Activated CD4-positive, alpha-beta memory T cell treated with anti-CD3 and anti-CD28 coated beads, Interleukin-2, amount 10 ng/mL, durations not matched to agents 7 days and 5 days (primary cell): ENCODE measurements at regions of chr11 and their contacts with region 1.

Region 1: DNA sequence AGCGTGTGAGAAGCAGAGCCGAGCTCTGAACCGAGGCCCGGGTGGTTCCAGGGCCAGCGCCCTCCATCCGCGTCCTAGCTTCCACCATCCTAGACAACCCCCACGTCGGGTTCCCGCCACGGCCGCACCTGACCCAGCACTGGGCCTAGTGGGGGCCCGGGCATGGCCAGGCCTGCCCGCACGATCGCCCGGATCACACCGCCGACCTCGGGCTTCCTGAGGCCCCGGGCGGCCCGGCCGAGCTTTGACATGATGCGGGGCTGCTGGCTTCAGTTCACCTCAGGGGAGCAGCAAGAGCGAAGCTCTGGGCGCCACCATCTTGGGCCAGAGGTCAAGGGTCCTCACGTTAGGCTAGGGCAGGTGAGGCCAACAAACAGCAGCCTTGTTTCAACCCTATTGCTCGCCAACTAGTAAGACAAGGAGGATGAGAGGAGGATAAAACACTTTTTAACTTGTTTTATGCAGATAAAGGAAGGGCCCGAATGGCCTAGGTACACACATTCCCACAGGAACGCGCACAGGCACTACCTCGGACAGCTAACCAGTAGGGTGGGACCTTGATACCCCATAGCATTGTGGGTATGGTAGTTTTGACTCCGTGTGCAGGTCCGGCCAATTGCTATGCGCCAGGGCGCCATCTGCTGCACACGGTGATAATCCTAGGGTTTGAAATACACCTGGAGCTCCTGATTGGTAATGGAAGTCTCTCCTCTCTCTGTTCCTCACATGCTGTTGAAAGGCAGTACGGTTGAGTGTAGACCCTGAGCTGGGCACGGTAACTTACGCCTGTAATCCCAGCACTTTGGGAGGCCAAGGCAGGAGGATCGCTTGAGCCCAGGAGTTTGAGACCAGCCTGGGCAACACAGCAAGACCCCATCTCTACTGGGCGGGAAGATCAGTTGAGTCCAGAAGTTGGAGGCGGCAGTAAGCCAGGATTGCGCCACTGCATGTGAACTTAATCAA is at the start of gene MRPL11:
- DNase-seq: peak; percentile 91
- H3K4me3 Mint-ChIP-seq: peak within 1 kb of the TSS; percentile 88
- H3K27ac Mint-ChIP-seq: peak within 1 kb of the TSS; percentile 89
- H3K4me1 Mint-ChIP-seq: peaks cover 24% of the 10 kb centered on the region
- H3K27me3 Mint-ChIP-seq: no peaks in the 10 kb centered on the region
- total RNA-seq, gene MRPL11: 44.2 to 55.3 TPM

Region 2: DNA sequence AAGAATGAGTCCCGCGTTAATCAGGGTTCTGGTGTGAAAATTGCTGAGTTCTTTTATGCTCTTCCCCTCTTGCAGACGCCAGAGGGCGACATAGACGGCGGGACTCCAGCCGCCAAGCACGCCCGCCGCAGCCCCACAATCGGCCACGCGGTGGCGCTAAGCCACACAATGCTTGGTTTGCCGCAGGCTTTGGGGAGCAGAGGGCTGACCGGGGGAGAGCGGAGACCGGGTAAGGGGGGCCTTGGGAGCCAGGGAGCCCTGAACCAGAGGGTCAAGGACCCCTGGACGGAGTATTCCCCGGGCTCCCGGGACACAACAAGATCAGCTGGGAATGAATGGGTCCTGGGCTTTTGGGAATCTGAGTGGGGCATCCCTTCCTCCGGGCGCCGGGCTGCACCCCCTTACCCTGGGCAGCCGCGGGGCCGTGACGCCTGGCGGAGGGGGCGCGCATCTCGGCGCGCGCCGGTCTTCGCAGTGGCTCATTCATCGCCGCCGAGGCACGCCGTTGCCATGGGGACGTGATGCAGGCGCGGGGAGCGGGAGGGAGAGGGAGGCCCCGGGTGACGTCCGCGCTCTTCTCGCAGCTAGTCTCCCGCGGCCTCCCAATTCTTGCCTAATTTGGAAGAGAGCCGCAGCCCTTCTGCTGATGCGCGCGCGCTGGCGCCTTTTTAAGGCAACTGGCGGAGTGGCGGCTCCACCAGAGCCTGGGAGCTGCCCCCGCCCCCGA is 30.1 kb before region 1 on chr11:
- CTCF ChIA-PET with region 1: interaction called, 34 read pairs
- POLR2A ChIA-PET with region 1: interaction called, 3 read pairs
- DNase-seq: peak; percentile 91
- H3K4me3 Mint-ChIP-seq: peak overlapping the region; percentile 62
- H3K27ac Mint-ChIP-seq: no peak overlapping the region
- H3K4me1 Mint-ChIP-seq: peaks cover 5% of the 10 kb centered on the region
- H3K27me3 Mint-ChIP-seq: peaks cover 18% of the 10 kb centered on the region

Region 3: DNA sequence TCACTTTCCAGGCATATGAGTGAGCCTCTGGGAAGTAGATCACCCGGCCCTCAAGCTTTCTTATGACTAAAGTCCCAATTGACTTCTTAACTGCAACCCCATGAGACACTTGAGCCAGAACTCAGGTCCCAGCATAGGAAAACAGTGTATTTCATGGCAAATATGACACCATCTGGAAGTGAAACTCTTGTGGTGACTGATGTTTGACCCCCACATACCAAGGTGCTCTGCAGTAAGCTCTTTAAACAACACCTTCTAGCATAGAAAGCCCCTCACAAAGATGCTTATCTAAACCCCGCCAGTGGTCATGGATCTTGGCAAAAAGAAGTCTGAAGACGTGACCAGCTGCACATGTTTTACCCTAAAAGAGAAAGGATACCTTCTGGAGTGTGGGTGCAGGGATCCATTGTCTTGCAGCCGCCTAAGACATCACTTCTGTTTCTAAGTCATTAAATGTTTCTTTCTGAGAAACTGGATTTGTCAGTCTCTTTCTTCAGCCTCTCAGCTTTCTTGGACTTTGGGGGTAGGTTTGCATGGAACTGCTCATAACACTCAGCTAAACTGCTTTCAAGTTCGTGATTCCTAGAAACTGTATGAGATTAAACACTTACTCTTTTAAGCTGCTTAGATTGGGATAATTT is 20.5 kb after region 1 on chr11:
- CTCF ChIA-PET with region 1: interaction called, 10 read pairs
- POLR2A ChIA-PET with region 1: no interaction called
- DNase-seq: no peak
- H3K4me3 Mint-ChIP-seq: no peak overlapping the region
- H3K27ac Mint-ChIP-seq: no peak overlapping the region
- H3K4me1 Mint-ChIP-seq: peaks cover 39% of the 10 kb centered on the region
- H3K27me3 Mint-ChIP-seq: no peaks in the 10 kb centered on the region

Region 4: DNA sequence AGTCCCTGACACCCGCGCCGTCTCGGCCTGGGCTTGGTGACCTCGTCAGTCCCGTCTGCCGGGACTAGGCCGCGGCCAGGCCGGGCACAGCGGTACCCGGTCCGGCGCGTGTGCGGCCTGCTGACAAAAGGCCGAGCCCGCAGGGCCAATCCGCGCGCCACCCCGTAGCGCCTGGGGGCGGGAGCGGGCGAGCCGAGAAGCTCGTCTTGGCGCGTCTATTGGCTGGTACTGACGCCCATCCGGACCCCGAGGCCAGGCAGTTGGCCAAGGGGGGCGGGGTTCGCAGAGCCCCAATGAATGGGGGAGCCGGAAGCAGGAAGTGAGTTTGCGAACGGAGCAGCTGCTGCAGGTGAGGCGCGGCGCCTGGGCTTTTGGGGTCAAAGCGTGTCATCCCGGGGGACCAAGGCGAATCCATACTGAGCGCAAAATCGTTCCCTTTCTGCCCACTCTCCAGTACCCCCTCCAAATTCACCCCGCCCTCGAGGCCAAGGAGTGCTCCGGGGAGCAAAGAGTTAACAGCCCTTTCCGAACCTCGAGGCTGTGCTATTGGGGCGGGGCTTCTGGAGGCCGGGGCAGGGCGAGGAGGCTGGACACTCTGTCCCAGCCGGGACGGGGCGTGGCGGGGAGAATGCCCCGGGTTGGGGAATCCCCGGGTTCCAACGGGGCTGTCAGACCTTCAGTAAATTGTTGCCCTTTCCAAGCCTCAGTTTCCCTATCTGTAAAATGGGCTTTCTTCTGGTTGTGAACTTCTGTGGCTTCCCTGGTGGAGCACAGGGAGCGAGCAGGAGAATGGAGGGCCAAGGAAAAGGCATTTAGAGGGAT is 41.5 kb after region 1 on chr11 and contains the start of gene DPP3:
- CTCF ChIA-PET with region 1: interaction called, 19 read pairs
- POLR2A ChIA-PET with region 1: interaction called, 15 read pairs
- DNase-seq: peak; percentile 97
- H3K4me3 Mint-ChIP-seq: peak within 1 kb of the TSS; percentile 78
- H3K27ac Mint-ChIP-seq: peak within 1 kb of the TSS; percentile 86
- H3K4me1 Mint-ChIP-seq: peaks cover 27% of the 10 kb centered on the region
- H3K27me3 Mint-ChIP-seq: no peaks in the 10 kb centered on the region
- total RNA-seq, gene DPP3: 59.3 to 60.6 TPM